ENCODE measurements at regions of chr6 and their contacts with region 1.

Region 1: DNA sequence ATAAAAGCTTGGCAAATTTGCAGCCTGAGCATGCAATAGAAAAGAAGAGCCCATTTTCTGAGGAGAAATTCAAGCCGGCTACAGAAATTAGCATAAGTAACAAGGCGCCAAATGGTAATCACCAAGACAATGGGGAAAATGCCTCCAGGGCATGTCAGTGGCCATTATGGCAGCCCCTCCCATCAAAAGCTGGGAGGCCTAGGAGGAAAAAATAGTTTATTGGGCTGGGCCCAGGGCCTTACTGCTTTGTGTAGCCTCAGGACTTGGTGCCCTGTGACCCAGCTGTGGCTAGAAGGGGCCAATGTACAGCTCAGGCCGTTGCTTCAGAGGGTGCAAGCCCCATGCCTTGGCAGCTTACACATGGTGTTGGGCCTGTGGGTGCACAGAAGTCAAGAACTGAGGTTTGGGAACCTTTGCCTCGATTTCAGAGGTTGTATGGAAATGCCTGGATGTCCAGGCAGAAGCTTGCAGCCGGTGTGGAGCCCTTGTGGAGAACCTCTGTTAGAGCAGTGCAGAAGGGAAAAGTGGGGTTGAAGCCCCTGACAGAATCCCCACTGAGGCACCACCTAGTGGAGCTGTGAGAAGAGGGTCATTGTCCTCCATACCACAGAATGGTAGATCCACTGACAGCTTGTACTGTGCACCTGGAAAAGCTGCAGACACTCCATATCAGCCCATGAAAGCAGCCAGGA is 328.5 kb upstream of the MAP3K7 start:
- DNase-seq: no peak
- ATAC-seq: no peak
- H3K4me3 ChIP-seq: no peak overlapping the region
- H3K4me3 Mint-ChIP-seq: no peak overlapping the region
- H3K27ac ChIP-seq: no peak overlapping the region
- H3K27ac Mint-ChIP-seq: no peak overlapping the region
- H3K4me1 ChIP-seq: no peaks in the 10 kb centered on the region
- H3K4me1 Mint-ChIP-seq: no peaks in the 10 kb centered on the region
- H3K27me3 ChIP-seq: peaks cover 0 to 8% of the 10 kb centered on the region in 2 experiments
- H3K27me3 Mint-ChIP-seq: peaks cover 14 to 18% of the 10 kb centered on the region in 2 donors

Region 2: DNA sequence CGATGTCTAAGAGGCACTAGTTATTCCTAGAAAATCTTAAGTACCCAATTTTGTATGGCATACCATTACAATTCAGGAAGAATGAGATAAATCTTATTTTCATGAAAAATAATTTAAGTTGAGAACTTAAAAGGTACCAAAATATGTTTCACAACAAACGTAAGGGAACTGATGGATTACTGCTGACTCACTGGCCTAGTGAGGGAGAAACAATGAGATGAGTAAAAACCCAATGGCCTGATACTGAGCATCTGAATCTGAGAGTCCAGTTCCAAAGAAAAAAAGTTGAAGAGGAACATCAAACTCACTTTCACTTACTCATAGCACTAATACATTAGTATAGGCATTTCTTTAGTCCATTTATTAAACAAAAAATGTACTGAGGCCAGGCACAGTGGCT is 1151.8 kb before region 1 on chr6:
- CTCF ChIA-PET with region 1: interaction called in 1 of 2 experiments, 10 read pairs
- POLR2A ChIA-PET with region 1: no interaction called
- DNase-seq: no peak
- ATAC-seq: no peak
- H3K4me3 ChIP-seq: no peak overlapping the region
- H3K4me3 Mint-ChIP-seq: no peak overlapping the region
- H3K27ac ChIP-seq: no peak overlapping the region
- H3K27ac Mint-ChIP-seq: no peak overlapping the region
- H3K4me1 ChIP-seq: no peaks in the 10 kb centered on the region
- H3K4me1 Mint-ChIP-seq: no peaks in the 10 kb centered on the region
- H3K27me3 ChIP-seq: no peaks in the 10 kb centered on the region
- H3K27me3 Mint-ChIP-seq: no peaks in the 10 kb centered on the region

Region 3: GRCh38 chr6:90928051-90928450 is 12.7 kb after region 1 on chr6:
- CTCF ChIA-PET with region 1: no interaction called
- POLR2A ChIA-PET with region 1: no interaction called
- DNase-seq: no peak
- ATAC-seq: no peak
- H3K4me3 ChIP-seq: no peak overlapping the region
- H3K4me3 Mint-ChIP-seq: no peak overlapping the region
- H3K27ac ChIP-seq: no peak overlapping the region
- H3K27ac Mint-ChIP-seq: no peak overlapping the region
- H3K4me1 ChIP-seq: no peaks in the 10 kb centered on the region
- H3K4me1 Mint-ChIP-seq: no peaks in the 10 kb centered on the region
- H3K27me3 ChIP-seq: no peaks in the 10 kb centered on the region
- H3K27me3 Mint-ChIP-seq: peaks cover 19 to 23% of the 10 kb centered on the region in 2 donors